Activated CD4-positive, alpha-beta T cell treated with anti-CD3 and anti-CD28 coated beads for 36 hours (primary cell): ENCODE measurements at regions of chr19 and their contacts with region 1.

Region 1: GRCh38 chr19:50329146-50329925 is at the start of gene KCNC3:
- DNase-seq: peak; percentile 99
- ATAC-seq: peak; percentile 67
- H3K4me3 Mint-ChIP-seq: peak within 1 kb of the TSS; percentile 75
- H3K27ac Mint-ChIP-seq: peak within 1 kb of the TSS; percentile 86
- H3K4me1 Mint-ChIP-seq: peaks cover 59% of the 10 kb centered on the region
- H3K27me3 Mint-ChIP-seq: peaks cover 33% of the 10 kb centered on the region
- total RNA-seq, gene KCNC3: 9.1 to 9.7 TPM

Region 2: GRCh38 chr19:49983645-49984229 is 345.6 kb before region 1 on chr19:
- CTCF ChIA-PET with region 1: interaction called, 6 read pairs
- POLR2A ChIA-PET with region 1: no interaction called
- intact Hi-C with region 1: loop called in 1 of 2 experiments (anchors 5 kb)
- DNase-seq: peak; percentile 90
- ATAC-seq: peak; percentile 82
- H3K4me3 Mint-ChIP-seq: no peak overlapping the region
- H3K27ac Mint-ChIP-seq: no peak overlapping the region
- H3K4me1 Mint-ChIP-seq: peaks cover 13% of the 10 kb centered on the region
- H3K27me3 Mint-ChIP-seq: no peaks in the 10 kb centered on the region

Region 3: GRCh38 chr19:50300814-50301606 is 28.3 kb before region 1 on chr19:
- CTCF ChIA-PET with region 1: no interaction called
- POLR2A ChIA-PET with region 1: no interaction called
- intact Hi-C with region 1: loop called in 1 of 2 experiments (anchors 1 kb)
- DNase-seq: peak; percentile 36
- ATAC-seq: peak; percentile 99
- H3K4me3 Mint-ChIP-seq: no peak overlapping the region
- H3K27ac Mint-ChIP-seq: no peak overlapping the region
- H3K4me1 Mint-ChIP-seq: peaks cover 18% of the 10 kb centered on the region
- H3K27me3 Mint-ChIP-seq: peaks cover 25% of the 10 kb centered on the region

Region 4: DNA sequence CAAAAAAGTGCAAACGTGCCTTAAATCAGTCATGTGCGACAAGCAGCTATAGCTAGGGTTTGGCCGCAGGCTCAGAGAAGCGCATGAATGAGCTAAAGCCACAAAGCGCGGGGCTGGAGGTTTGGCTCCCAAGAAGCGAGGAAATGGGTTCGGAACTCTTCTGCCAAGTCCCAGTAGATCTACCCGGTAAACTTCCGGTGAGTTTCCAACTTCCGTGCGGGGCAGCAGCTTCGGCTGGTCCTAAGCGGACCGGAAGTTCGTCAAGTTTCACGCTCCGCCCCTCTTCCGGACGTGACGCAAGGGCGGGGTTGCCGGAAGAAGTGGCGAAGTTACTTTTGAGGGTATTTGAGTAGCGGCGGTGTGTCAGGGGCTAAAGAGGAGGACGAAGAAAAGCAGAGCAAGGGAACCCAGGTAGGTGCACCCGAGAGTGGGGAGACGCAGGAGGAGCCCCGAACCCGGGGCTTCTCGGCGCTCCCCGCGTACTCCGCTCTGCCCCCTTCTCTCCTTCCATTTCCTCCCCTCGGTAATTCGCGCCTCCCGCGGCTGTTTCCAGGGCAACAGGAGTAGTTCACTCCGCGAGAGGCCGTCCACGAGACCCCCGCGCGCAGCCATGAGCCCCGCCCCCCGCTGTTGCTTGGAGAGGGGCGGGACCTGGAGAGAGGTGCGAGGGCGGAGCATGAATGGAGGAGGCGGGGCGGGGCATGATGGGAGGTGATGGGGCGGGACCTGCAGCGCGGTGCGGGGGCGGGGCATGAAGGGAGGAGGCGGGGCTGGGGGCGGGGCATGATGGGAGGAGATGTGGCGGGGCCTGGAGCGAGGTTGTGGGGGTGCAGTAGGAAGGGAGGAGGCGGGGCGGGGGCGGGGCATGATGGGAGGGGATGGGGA is 47.1 kb after region 1 on chr19 and contains the start of gene NR1H2:
- CTCF ChIA-PET with region 1: interaction called, 3 read pairs
- POLR2A ChIA-PET with region 1: interaction called, 4 read pairs
- intact Hi-C with region 1: loop called in 1 of 2 experiments (anchors 1 kb)
- DNase-seq: peak; percentile 97
- ATAC-seq: peak; percentile 89
- H3K4me3 Mint-ChIP-seq: peak within 1 kb of the TSS; percentile 89
- H3K27ac Mint-ChIP-seq: peak within 1 kb of the TSS; percentile 97
- H3K4me1 Mint-ChIP-seq: peaks cover 21% of the 10 kb centered on the region
- H3K27me3 Mint-ChIP-seq: no peaks in the 10 kb centered on the region
- total RNA-seq, gene NR1H2: 50.3 to 53.6 TPM

Region 5: DNA sequence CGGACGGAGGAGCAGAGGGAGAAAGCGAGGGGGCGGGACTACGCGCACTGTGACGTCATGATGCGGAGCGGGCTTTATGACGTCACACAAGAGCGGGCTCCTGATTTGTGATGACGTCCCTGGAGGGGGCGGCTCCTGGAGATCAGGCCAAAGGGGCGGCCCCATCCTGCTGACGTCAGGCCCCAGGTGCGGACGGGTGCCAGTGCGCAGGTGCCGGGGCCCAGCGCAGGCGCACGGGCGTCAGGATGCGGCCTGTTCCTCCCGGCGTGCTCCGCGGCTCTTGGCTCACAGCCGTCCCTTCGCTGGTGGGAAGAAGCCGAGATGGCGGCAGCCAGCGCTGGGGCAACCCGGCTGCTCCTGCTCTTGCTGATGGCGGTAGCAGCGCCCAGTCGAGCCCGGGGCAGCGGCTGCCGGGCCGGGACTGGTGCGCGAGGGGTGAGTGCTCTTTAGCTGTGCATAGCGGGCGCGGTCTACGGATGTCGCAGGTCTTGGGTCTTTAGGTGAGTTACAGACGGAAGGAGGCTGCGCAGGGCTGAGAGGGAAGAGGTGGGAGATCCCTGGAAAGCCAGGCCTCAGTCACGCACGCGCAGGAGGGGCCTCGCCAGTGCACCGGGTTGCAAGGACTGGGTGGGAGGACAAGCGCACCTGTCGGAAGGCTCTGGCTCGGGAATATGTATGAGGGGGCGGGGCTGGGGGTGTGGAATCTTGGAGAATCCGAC is 147.0 kb after region 1 on chr19 and contains the starts of genes EMC10 and GARIN5A:
- CTCF ChIA-PET with region 1: no interaction called
- POLR2A ChIA-PET with region 1: no interaction called
- intact Hi-C with region 1: loop called in 1 of 2 experiments (anchors 1 kb)
- DNase-seq: peak; percentile 98
- ATAC-seq: peak; percentile 98
- H3K4me3 Mint-ChIP-seq: peak within 1 kb of the TSS; percentile 90
- H3K27ac Mint-ChIP-seq: peak within 1 kb of the TSS; percentile 84
- H3K4me1 Mint-ChIP-seq: peaks cover 18% of the 10 kb centered on the region
- H3K27me3 Mint-ChIP-seq: no peaks in the 10 kb centered on the region
- total RNA-seq, gene EMC10: 33.4 to 34.7 TPM
- total RNA-seq, gene GARIN5A: 0.48 to 0.58 TPM

Region 6: DNA sequence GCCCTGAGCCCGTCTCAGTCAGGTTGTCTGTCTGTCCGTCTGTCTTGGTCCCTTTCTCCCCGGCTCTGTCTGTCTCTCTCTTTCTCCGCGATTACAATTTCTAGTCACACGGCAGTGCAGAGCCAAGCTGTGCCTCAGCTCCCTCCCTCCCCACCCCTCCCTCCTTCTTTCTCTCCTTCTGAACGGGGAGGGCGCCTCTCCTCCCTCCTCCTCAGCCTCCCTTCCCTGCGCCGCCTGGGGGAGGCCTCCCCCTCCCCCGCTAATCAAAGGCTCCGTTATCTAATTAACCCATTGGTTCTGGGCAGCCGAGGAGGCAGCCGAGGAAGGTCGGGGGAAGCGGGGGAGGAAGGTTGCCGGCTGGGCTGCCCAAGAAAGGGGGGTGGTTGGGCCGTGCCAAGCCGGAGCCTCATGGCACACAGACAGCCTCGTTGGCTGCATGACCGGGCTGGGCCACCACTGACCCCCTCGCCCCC is 222.4 kb after region 1 on chr19:
- CTCF ChIA-PET with region 1: no interaction called
- POLR2A ChIA-PET with region 1: no interaction called
- intact Hi-C with region 1: no loop called
- DNase-seq: no peak
- ATAC-seq: no peak
- H3K4me3 Mint-ChIP-seq: no peak overlapping the region
- H3K27ac Mint-ChIP-seq: no peak overlapping the region
- H3K4me1 Mint-ChIP-seq: peaks cover 2% of the 10 kb centered on the region
- H3K27me3 Mint-ChIP-seq: peaks cover 51% of the 10 kb centered on the region

Region 7: DNA sequence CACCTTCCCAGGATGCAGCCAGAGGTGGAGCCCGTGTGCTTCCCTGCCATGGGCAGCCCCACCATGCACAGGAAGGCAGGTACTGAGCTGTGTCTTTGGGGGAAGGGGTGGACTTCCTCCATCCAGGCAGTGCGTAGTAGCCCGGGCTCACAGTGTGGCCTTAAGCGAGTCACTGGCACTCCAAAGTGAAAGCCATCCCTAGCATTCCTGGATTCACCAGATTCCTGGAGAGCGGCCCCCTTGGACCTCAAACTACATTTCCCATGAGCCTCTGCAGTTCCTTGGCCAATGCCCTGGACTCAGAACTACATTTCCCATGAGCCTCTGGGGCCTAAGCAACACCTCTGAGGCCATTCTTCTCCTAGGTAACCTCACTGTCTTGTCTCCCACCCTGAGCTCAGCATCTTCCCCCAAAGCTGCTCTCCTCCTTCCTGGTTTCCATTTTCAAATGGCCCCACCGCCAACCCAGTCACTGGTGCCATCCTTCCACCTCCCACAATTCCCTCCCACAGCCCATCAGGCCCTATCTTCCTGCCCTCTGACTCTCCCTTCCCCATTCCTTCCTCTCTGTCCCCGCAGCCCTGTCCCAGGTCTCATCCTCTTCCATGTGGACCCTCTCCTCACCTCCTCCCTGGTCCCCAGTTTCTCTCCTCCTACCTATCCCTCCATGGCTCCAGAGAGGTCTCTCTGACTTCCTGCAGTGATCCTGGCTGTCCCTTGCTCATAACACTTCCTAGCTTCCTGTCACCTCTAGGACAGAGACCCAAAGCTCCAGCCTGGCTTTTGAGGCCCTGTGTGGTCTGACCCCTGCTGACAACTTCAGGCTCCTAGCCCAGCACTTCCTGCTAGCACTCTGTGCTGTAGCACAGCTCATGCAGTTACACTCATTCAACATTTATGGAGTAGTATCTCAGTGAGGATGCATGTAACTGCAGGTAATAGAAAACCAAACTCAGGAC is 320.4 kb after region 1 on chr19 and contains the start of gene C19orf81:
- CTCF ChIA-PET with region 1: no interaction called
- POLR2A ChIA-PET with region 1: no interaction called
- intact Hi-C with region 1: no loop called
- DNase-seq: no peak
- ATAC-seq: peak; percentile 39
- H3K4me3 Mint-ChIP-seq: no peak within 1 kb of the TSS
- H3K27ac Mint-ChIP-seq: no peak within 1 kb of the TSS
- H3K4me1 Mint-ChIP-seq: no peaks in the 10 kb centered on the region
- H3K27me3 Mint-ChIP-seq: peaks cover 35% of the 10 kb centered on the region
- total RNA-seq, gene C19orf81: 1.3 to 1.7 TPM